Posterior vena cava (tissue), 2 donors: ENCODE measurements at regions of chr5 and their contacts with region 1.

Region 1: DNA sequence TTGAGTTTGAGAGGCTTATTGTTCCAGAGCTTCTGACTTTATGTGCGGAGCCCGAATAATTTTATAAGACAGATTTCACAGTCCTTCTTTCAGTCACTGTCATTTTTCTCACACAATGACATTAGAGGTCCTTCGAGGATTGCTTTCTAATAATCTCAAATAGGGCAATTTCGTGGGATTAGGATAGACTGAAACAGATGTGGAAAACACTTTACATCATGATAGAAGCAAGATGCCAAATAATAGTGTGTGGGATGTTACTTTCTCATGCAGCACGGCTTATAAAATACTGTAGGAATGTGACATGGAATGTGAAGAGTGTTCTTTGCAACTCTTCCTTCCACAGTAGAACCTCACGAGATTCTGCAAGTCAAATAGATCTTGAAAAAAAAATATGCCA is 451.3 kb downstream of the SEMA5A start:
- DNase-seq: no peak

Region 2: DNA sequence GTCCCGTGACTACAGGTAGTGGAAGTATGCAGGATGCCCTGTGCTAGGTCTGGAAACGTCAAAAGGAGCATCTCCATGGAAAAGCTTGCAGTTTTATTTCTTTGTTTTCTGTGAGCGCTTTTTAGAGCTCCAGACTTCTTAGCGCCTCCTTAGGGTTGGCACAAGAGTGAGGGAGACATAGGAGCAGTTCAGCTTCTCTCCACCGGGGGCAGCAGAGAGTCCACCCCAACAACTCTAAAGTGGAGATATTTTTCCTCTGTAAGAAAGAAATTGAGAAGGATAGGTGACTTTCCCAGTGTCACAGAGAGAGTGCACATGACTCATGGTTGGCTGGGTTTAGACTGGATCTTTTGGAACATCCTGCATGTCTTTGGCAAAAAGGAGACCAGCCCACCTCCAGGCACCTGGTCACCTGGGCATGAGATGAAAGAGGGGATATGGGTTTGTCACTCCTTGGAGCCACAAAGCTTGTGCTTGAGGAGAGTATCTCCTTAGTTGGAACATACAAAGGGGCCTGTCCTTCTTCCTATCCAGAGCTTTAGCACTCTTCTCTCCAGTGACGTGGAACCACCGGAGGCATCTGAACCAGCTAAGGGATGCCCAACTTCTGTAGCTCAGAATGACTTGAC is 186.4 kb before region 1 on chr5:
- intact Hi-C with region 1: no loop called
- DNase-seq: no peak

Region 3: DNA sequence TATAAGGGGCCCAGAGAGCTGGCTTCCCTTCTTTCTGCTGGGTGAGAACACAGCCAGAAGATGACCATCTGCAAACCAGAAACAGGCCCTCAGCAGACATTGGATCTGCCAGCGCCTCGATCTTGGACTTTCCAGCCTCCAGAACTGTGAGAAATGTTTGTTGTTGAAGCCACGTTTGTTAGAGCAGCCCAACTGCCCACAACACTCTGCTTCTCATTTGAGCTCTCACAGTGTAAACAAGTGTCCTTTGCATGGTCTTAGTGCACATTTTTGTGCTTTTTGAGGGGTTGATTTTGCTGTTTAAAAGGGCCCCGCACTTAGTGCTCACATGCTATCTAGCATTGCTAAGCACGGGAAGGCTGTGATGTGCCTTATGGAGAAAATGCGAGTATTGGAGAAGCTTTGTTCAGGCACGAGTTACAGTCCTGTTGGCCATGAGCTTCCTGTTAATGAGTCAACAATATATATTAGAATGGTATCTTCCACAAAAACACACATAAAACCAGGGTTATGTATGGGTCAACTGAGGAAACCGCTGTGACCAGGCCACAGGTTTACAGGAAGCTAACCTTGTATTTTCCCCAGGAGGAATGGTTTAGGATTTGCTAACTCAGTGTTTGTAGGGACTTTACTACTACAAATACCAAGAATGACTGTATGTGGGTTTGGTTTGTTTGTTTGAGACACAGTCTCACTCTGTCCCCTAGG is 1201.2 kb after region 1 on chr5:
- intact Hi-C with region 1: loop called in 1 of 2 experiments (anchors 5 kb)
- DNase-seq: peak; percentile 31